ENCODE measurements at regions of chr13 and their contacts with region 1.

Region 1: DNA sequence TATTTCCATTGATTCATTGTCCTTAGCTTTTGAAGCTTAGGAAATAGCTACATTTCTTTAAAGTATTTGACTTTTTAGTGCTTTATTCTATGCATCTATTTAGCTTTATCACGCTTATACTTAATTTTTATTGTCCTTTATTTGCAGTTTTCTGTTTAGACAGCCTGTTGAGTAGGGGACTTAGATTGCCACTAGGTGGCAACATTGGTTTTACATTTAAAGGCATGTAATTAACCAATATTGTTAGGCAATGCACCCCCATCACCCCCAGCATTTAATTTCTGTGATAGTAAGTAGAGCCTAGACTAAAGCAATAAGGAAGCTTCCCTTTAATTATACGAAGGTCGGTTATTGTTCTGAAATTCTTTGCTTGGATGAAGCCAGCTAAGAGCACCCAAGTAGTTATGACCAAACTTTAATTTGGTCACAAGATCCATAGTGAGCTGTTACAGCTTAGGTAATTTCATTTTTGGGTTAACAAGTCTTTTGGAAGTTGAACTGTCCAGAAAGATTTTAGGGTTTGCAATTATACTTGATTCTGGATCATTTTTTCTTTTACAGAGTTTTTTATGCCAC is 36.5 kb downstream of the B3GLCT start:
- DNase-seq: peak in 2 of 9 experiments; percentile 15 to 34
- ATAC-seq: peak; percentile 36
- H3K4me3 ChIP-seq: no peak overlapping the region
- H3K4me3 Mint-ChIP-seq: no peak overlapping the region
- H3K27ac ChIP-seq: no peak overlapping the region
- H3K27ac Mint-ChIP-seq: no peak overlapping the region
- H3K4me1 ChIP-seq: no peaks in the 10 kb centered on the region
- H3K4me1 Mint-ChIP-seq: no peaks in the 10 kb centered on the region
- H3K27me3 ChIP-seq: no peaks in the 10 kb centered on the region
- H3K27me3 Mint-ChIP-seq: no peaks in the 10 kb centered on the region
- CTCF ChIP-seq: peak; percentile 64

Region 2: GRCh38 chr13:30453727-30454126 is 782.6 kb before region 1 on chr13:
- CTCF ChIA-PET with region 1: no interaction called
- POLR2A ChIA-PET with region 1: no interaction called
- intact Hi-C with region 1: no loop called
- DNase-seq: no peak
- ATAC-seq: no peak
- H3K4me3 ChIP-seq: no peak overlapping the region
- H3K4me3 Mint-ChIP-seq: no peak overlapping the region
- H3K27ac ChIP-seq: no peak overlapping the region
- H3K27ac Mint-ChIP-seq: no peak overlapping the region
- H3K4me1 ChIP-seq: no peaks in the 10 kb centered on the region
- H3K4me1 Mint-ChIP-seq: peaks cover 15% of the 10 kb centered on the region
- H3K27me3 ChIP-seq: no peaks in the 10 kb centered on the region
- H3K27me3 Mint-ChIP-seq: no peaks in the 10 kb centered on the region
- CTCF ChIP-seq: no peak

Region 3: GRCh38 chr13:31221057-31221456 is 15.2 kb before region 1 on chr13:
- CTCF ChIA-PET with region 1: interaction called, 15 read pairs
- POLR2A ChIA-PET with region 1: no interaction called
- intact Hi-C with region 1: no loop called
- DNase-seq: no peak
- ATAC-seq: no peak
- H3K4me3 ChIP-seq: no peak overlapping the region
- H3K4me3 Mint-ChIP-seq: no peak overlapping the region
- H3K27ac ChIP-seq: no peak overlapping the region
- H3K27ac Mint-ChIP-seq: no peak overlapping the region
- H3K4me1 ChIP-seq: no peaks in the 10 kb centered on the region
- H3K4me1 Mint-ChIP-seq: no peaks in the 10 kb centered on the region
- H3K27me3 ChIP-seq: no peaks in the 10 kb centered on the region
- H3K27me3 Mint-ChIP-seq: no peaks in the 10 kb centered on the region
- CTCF ChIP-seq: no peak

Region 4: GRCh38 chr13:31248965-31249539 is 12.8 kb after region 1 on chr13:
- CTCF ChIA-PET with region 1: interaction called, 16 read pairs
- POLR2A ChIA-PET with region 1: no interaction called
- intact Hi-C with region 1: no loop called
- DNase-seq: no peak
- ATAC-seq: no peak
- H3K4me3 ChIP-seq: no peak overlapping the region
- H3K4me3 Mint-ChIP-seq: no peak overlapping the region
- H3K27ac ChIP-seq: no peak overlapping the region
- H3K27ac Mint-ChIP-seq: no peak overlapping the region
- H3K4me1 ChIP-seq: no peaks in the 10 kb centered on the region
- H3K4me1 Mint-ChIP-seq: no peaks in the 10 kb centered on the region
- H3K27me3 ChIP-seq: no peaks in the 10 kb centered on the region
- H3K27me3 Mint-ChIP-seq: no peaks in the 10 kb centered on the region
- CTCF ChIP-seq: no peak

Region 5: GRCh38 chr13:31409678-31410356 is 173.5 kb after region 1 on chr13:
- CTCF ChIA-PET with region 1: interaction called, 8 read pairs
- POLR2A ChIA-PET with region 1: no interaction called
- intact Hi-C with region 1: loop called in 1 of 2 experiments (anchors 5 kb)
- DNase-seq: no peak
- ATAC-seq: no peak
- H3K4me3 ChIP-seq: no peak overlapping the region
- H3K4me3 Mint-ChIP-seq: no peak overlapping the region
- H3K27ac ChIP-seq: no peak overlapping the region
- H3K27ac Mint-ChIP-seq: no peak overlapping the region
- H3K4me1 ChIP-seq: no peaks in the 10 kb centered on the region
- H3K4me1 Mint-ChIP-seq: no peaks in the 10 kb centered on the region
- H3K27me3 ChIP-seq: no peaks in the 10 kb centered on the region
- H3K27me3 Mint-ChIP-seq: peaks cover 3% of the 10 kb centered on the region
- CTCF ChIP-seq: no peak

Region 6: GRCh38 chr13:31424117-31424729 is 187.9 kb after region 1 on chr13:
- CTCF ChIA-PET with region 1: interaction called, 33 read pairs
- POLR2A ChIA-PET with region 1: no interaction called
- intact Hi-C with region 1: loop called (anchors 1 kb)
- DNase-seq: peak; percentile 7 to 64 (median 42)
- ATAC-seq: peak; percentile 57
- H3K4me3 ChIP-seq: no peak overlapping the region
- H3K4me3 Mint-ChIP-seq: no peak overlapping the region
- H3K27ac ChIP-seq: no peak overlapping the region
- H3K27ac Mint-ChIP-seq: no peak overlapping the region
- H3K4me1 ChIP-seq: no peaks in the 10 kb centered on the region
- H3K4me1 Mint-ChIP-seq: peaks cover 4% of the 10 kb centered on the region
- H3K27me3 ChIP-seq: no peaks in the 10 kb centered on the region
- H3K27me3 Mint-ChIP-seq: peaks cover 5% of the 10 kb centered on the region
- CTCF ChIP-seq: peak; percentile 61

Region 7: DNA sequence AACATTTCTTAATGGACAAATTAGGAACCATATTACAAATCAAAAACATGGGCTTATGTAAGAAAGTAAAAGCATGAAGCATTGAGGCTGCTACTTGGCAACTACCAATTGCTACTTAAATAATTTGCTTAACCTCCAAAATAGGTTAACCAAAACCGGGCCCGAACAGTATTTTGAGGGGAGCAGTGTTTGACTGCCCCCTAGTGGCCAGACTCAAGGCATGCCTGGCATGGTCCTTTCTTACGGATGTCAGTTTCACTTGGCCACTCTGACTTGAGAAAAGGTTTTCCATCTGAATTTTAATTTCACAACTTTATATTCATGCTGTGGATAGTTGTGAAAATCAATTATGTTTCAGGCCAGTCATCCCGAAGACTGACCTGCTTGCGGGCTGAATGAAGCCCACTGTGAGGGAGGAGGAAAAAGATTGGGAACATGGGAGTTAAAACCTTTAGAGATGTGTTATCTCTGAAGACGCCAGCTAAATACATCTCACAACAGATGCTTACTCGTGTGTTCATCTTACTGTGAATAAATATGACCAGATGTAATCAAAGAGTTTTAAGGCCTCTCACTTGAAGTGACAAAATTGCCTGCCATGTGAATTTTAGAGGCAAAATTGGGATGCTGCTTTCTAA is 505.9 kb after region 1 on chr13:
- CTCF ChIA-PET with region 1: interaction called, 3 read pairs
- POLR2A ChIA-PET with region 1: no interaction called
- intact Hi-C with region 1: loop called in 1 of 2 experiments (anchors 2 kb)
- DNase-seq: peak; percentile 16 to 73 (median 62)
- ATAC-seq: peak; percentile 61
- H3K4me3 ChIP-seq: no peak overlapping the region
- H3K4me3 Mint-ChIP-seq: no peak overlapping the region
- H3K27ac ChIP-seq: no peak overlapping the region
- H3K27ac Mint-ChIP-seq: no peak overlapping the region
- H3K4me1 ChIP-seq: no peaks in the 10 kb centered on the region
- H3K4me1 Mint-ChIP-seq: peaks cover 4% of the 10 kb centered on the region
- H3K27me3 ChIP-seq: no peaks in the 10 kb centered on the region
- H3K27me3 Mint-ChIP-seq: peaks cover 8% of the 10 kb centered on the region
- CTCF ChIP-seq: peak; percentile 97